Right cardiac atrium (tissue), 5 donors: ENCODE measurements at regions of chr6 and their contacts with region 1.

Region 1: DNA sequence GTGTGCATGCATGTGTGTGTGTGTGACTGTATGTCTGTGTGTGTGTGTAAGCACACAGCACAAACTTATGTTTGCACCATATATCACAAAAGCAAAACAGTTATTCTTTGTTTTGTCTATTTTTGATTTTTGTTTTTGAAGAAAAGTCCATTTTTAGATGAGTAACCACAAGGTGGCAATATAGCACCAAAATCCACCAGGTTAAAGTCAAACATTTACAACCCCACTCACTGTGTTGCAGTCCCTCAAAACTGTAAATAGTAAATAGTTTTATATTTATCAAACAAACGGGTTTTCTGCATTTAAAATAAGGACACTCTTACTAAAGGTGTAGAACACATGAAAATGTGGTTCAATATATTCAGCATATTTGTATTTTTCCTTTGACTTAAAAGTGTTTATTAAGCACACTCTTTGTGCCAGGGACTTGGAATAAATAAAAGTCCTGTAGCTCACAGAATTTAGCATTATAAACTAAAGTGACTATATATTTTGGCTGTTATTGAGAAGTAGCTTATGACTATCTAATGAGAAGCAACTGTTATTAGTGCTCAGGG is 118.5 kb downstream of the GFRAL start:
- DNase-seq: no peak
- ATAC-seq: no peak
- H3K4me3 ChIP-seq: no peak overlapping the region
- H3K27ac ChIP-seq: no peak overlapping the region
- H3K4me1 ChIP-seq: no peaks in the 10 kb centered on the region
- H3K27me3 ChIP-seq: no peaks in the 10 kb centered on the region

Region 2: DNA sequence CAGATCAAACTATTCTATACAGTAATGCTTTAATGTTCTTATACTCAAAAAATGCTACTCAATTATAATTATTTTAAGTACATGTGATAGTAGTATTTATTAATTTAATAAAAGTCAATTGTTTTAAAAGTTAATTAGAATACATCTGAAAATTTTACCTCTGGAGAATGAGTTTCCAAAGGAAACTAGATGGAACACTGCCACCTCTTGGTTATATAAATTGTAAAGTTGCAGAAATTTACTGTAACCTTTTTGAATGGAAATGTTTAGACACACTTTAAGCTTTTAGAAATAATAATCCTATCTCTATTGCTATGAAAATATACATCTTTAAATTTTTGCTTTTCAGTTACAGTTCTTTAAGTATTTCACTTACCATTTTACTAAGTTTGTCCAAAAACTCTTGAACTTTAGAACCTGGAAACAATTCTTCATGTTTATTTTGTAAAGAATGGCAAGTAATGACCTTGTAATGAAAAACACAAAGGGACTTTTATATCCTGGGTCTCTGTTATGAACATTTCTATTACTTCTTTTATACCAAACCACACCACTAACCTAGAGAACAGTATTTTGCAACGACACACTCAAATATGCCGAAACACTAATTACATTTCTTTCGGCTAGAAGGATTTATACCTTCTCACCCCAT is 440.6 kb after region 1 on chr6:
- intact Hi-C with region 1: loop called in 1 of 4 experiments (anchors 5 kb)
- DNase-seq: no peak
- ATAC-seq: no peak
- H3K4me3 ChIP-seq: no peak overlapping the region
- H3K27ac ChIP-seq: no peak overlapping the region
- H3K4me1 ChIP-seq: peaks cover 1% of the 10 kb centered on the region
- H3K27me3 ChIP-seq: no peaks in the 10 kb centered on the region

Region 3: DNA sequence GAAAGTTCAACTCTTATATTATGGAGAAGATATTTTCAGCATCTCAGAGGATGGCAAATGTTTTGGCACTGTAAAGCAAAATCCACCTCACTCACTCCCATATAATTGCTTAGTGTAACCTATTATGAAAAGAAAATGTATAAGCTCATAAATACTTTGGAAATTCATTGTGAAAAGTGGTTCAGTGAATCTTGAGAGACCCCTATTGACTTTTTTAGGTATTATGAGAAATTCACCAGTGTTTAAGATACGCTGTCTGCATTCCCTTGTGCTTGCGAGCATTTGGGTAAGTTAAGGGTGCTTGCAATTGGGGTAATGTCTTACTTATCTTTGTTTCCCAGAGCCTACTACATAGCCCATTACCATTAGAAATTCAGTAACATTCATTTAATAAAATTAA is 496.0 kb after region 1 on chr6:
- intact Hi-C with region 1: loop called in 1 of 4 experiments (anchors 10 kb)
- DNase-seq: no peak
- ATAC-seq: no peak
- H3K4me3 ChIP-seq: no peak overlapping the region
- H3K27ac ChIP-seq: no peak overlapping the region
- H3K4me1 ChIP-seq: no peaks in the 10 kb centered on the region
- H3K27me3 ChIP-seq: no peaks in the 10 kb centered on the region

Region 4: GRCh38 chr6:55953335-55953734 is 507.6 kb after region 1 on chr6:
- intact Hi-C with region 1: loop called in 2 of 4 experiments (anchors 5 to 10 kb)
- DNase-seq: no peak
- ATAC-seq: peak; percentile 62 to 68
- H3K4me3 ChIP-seq: peak overlapping the region; percentile 56
- H3K27ac ChIP-seq: no peak overlapping the region
- H3K4me1 ChIP-seq: no peaks in the 10 kb centered on the region
- H3K27me3 ChIP-seq: no peaks in the 10 kb centered on the region

Region 5: GRCh38 chr6:56292505-56293181 is 846.9 kb after region 1 on chr6:
- intact Hi-C with region 1: loop called in 1 of 4 experiments (anchors 10 kb)
- DNase-seq: no peak
- ATAC-seq: peak; percentile 82 to 90
- H3K4me3 ChIP-seq: no peak overlapping the region
- H3K27ac ChIP-seq: no peak overlapping the region
- H3K4me1 ChIP-seq: peaks cover 4% of the 10 kb centered on the region
- H3K27me3 ChIP-seq: no peaks in the 10 kb centered on the region